Heart right ventricle (tissue), 16 donors: ENCODE measurements at regions of chr5 and their contacts with region 1.

Region 1: GRCh38 chr5:36870399-36871040 is 6.0 kb upstream of the NIPBL start:
- DNase-seq: no peak
- ATAC-seq: peak in 6 of 8 donors; percentile 50 to 82 (median 67)
- H3K4me3 ChIP-seq: no peak overlapping the region
- H3K27ac ChIP-seq: no peak overlapping the region
- H3K4me1 ChIP-seq: peaks cover 0 to 35% (median 22%) of the 10 kb centered on the region in 9 donors
- H3K27me3 ChIP-seq: no peaks in the 10 kb centered on the region
- CTCF ChIP-seq: peak; percentile 23 to 79 (median 69)

Region 2: DNA sequence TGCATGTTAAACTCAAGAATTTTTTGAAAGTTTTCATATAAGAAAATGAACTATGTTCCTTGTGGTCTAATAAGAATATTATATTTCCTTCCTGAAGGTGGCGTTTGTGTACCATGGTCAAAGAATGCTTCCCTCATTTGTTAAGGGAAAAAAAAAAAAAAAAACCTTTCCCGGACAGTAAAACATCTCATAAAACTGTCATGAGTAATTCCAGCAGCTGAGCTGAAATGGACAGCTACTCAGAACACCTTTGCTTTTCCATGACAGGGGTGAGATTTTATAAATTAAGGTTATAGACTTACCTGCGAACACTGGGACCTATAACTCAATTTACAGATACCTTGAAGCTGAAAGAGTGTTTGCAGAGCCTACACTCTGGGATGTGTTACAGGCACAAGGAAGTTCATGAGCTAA is 455.6 kb before region 1 on chr5:
- intact Hi-C with region 1: loop called in 1 of 10 experiments (anchors 10 kb)
- DNase-seq: no peak
- ATAC-seq: peak in 6 of 8 donors; percentile 43 to 61 (median 52)
- H3K4me3 ChIP-seq: no peak overlapping the region
- H3K27ac ChIP-seq: no peak overlapping the region
- H3K4me1 ChIP-seq: peaks cover 0 to 7% (median 4%) of the 10 kb centered on the region in 9 donors
- H3K27me3 ChIP-seq: no peaks in the 10 kb centered on the region
- CTCF ChIP-seq: peak; percentile 28 to 66 (median 50)

Region 3: GRCh38 chr5:36638056-36638455 is 232.5 kb before region 1 on chr5:
- intact Hi-C with region 1: no loop called
- DNase-seq: no peak
- ATAC-seq: peak in 1 of 8 donors; percentile 14
- H3K4me3 ChIP-seq: no peak overlapping the region
- H3K27ac ChIP-seq: no peak overlapping the region
- H3K4me1 ChIP-seq: peaks cover 0 to 23% (median 6%) of the 10 kb centered on the region in 9 donors
- H3K27me3 ChIP-seq: no peaks in the 10 kb centered on the region
- CTCF ChIP-seq: no peak

Region 4: GRCh38 chr5:36728697-36729543 is 141.6 kb before region 1 on chr5:
- intact Hi-C with region 1: loop called in 3 of 10 experiments (anchors 5 kb)
- DNase-seq: peak in 1 of 2 donors; percentile 20
- ATAC-seq: peak in 5 of 8 donors; percentile 50 to 74 (median 67)
- H3K4me3 ChIP-seq: no peak overlapping the region
- H3K27ac ChIP-seq: no peak overlapping the region
- H3K4me1 ChIP-seq: peaks cover 0 to 7% (median 0%) of the 10 kb centered on the region in 9 donors
- H3K27me3 ChIP-seq: peaks cover 0 to 4% (median 0%) of the 10 kb centered on the region in 7 donors
- CTCF ChIP-seq: peak; percentile 55 to 87 (median 74)

Region 5: GRCh38 chr5:36739751-36740221 is 130.7 kb before region 1 on chr5:
- intact Hi-C with region 1: loop called in 6 of 10 experiments (anchors 5 to 10 kb)
- DNase-seq: peak; percentile 48 to 50
- ATAC-seq: peak in 6 of 8 donors; percentile 48 to 60 (median 53)
- H3K4me3 ChIP-seq: no peak overlapping the region
- H3K27ac ChIP-seq: no peak overlapping the region
- H3K4me1 ChIP-seq: peaks cover 0 to 18% (median 7%) of the 10 kb centered on the region in 9 donors
- H3K27me3 ChIP-seq: peaks cover 0 to 24% (median 12%) of the 10 kb centered on the region in 7 donors
- CTCF ChIP-seq: peak; percentile 37 to 87 (median 69)

Region 6: GRCh38 chr5:36744773-36745589 is 125.5 kb before region 1 on chr5:
- intact Hi-C with region 1: loop called in 5 of 10 experiments (anchors 2 to 10 kb)
- DNase-seq: peak in 1 of 2 donors; percentile 15
- ATAC-seq: peak; percentile 66 to 84 (median 78)
- H3K4me3 ChIP-seq: peak overlapping the region; percentile 43 to 70 (median 64)
- H3K27ac ChIP-seq: peak overlapping the region in 6 of 10 donors; percentile 7 to 54 (median 27)
- H3K4me1 ChIP-seq: peaks cover 0 to 21% (median 9%) of the 10 kb centered on the region in 9 donors
- H3K27me3 ChIP-seq: peaks cover 0 to 24% (median 0%) of the 10 kb centered on the region in 7 donors
- CTCF ChIP-seq: peak in 3 of 9 donors; percentile 2 to 70 (median 25)

Region 7: GRCh38 chr5:36777105-36777757 is 93.3 kb before region 1 on chr5:
- intact Hi-C with region 1: loop called in 1 of 10 experiments (anchors 10 kb)
- DNase-seq: peak in 1 of 2 donors; percentile 16
- ATAC-seq: peak in 4 of 8 donors; percentile 42 to 71 (median 59)
- H3K4me3 ChIP-seq: no peak overlapping the region
- H3K27ac ChIP-seq: no peak overlapping the region
- H3K4me1 ChIP-seq: peaks cover 0 to 5% (median 0%) of the 10 kb centered on the region in 9 donors
- H3K27me3 ChIP-seq: peaks cover 0 to 8% (median 0%) of the 10 kb centered on the region in 7 donors
- CTCF ChIP-seq: peak in 8 of 9 donors; percentile 10 to 64 (median 52)

Region 8: GRCh38 chr5:36985387-36985786 is 114.9 kb after region 1 on chr5:
- intact Hi-C with region 1: no loop called
- DNase-seq: no peak
- ATAC-seq: no peak
- H3K4me3 ChIP-seq: no peak overlapping the region
- H3K27ac ChIP-seq: no peak overlapping the region
- H3K4me1 ChIP-seq: peaks cover 0 to 16% (median 0%) of the 10 kb centered on the region in 9 donors
- H3K27me3 ChIP-seq: no peaks in the 10 kb centered on the region
- CTCF ChIP-seq: no peak